ENCODE measurements at regions of chr16 and their contacts with region 1.

Region 1: DNA sequence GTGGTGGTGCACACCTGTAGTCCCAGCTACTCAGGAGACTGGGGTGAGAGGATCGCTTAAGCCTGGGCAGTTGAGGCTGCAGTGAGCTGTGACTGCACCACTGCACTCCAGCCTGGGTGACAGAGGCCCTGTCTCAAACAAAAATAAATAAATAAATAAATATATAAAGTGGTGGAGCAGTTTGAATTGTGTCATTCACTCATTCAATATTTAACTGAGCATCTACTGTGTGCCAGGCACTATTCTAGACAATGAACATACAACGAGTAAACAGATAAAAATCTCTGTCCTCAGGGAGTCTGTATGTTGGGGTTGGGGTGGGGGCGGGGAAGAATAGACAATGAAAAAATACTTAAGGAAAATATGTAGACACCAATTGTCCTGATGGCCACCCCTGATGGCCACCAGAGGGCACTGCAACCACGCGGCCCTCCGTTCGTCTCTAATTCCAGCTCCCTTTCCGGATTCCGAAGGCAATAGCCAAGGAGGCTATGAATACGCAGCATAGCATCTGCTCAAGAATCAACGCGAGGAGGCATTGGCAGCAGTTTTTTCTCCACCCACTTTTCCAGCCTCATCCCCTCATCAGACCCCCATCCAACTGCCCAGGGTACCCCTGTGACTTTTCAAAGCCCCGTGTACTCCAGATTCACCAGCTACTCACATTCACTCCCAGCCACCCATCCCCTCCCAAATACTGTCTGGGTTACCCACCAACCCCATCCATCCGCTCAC is 21.4 kb downstream of the QPRT start:
- DNase-seq: peak; percentile 28
- H3K4me3 ChIP-seq: no peak overlapping the region
- CTCF ChIP-seq: peak; percentile 83

Region 2: GRCh38 chr16:29182501-29182900 is 517.9 kb before region 1 on chr16:
- CTCF ChIA-PET with region 1: no interaction called
- POLR2A ChIA-PET with region 1: no interaction called
- DNase-seq: no peak
- H3K4me3 ChIP-seq: no peak overlapping the region
- CTCF ChIP-seq: no peak

Region 3: DNA sequence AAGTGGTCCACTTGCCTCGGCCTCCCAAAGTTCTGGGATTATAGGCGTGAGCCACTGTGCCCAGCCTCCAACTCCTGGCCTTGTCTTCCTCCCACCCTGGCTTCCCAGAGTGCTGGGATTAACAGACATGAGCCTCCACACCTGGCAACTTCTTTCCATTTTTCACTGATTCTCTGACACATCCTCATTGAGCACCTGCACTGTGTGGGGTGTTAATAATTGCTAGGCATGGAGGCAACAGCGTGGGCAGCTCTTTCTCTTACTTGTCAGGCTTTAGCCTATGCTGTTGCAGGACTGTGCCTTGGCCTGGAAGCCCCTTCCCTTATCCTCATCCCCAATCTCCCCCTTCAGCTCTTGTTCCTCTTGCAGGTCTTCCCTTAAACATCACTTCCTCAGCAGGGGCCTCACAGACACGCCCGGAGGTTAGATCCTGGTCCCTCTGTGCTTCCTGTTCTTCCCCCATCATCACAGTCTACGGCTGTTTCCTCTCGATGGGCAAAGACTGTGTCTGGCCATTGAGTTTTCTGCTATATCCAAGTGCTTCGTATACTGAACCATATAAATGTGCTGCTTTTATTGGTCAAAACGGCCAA is 13.6 kb before region 1 on chr16:
- CTCF ChIA-PET with region 1: interaction called, 22 read pairs
- POLR2A ChIA-PET with region 1: no interaction called
- DNase-seq: no peak
- H3K4me3 ChIP-seq: no peak overlapping the region
- CTCF ChIP-seq: no peak

Region 4: DNA sequence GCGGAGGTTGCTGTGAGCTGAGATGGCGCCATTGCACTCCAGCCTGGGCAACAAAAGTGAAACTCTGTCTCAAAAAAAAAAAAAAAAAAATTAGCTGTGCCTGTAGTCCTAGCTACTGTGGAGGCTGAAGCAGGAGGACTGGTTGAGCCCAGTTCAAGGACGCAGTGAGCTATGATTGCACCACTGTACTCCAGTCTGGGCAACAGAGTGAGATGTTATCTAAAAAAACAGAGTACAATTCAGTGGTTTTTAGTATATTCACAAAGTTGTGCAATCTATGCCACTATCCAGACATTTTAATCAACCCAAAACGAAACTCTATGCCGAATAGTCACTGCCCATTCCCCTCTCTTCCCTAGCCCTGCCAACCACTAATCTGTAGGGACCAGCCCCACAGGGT is 20.3 kb after region 1 on chr16:
- CTCF ChIA-PET with region 1: interaction called, 124 read pairs
- POLR2A ChIA-PET with region 1: no interaction called
- DNase-seq: no peak
- H3K4me3 ChIP-seq: no peak overlapping the region
- CTCF ChIP-seq: no peak

Region 5: GRCh38 chr16:29784901-29785500 is 84.6 kb after region 1 on chr16:
- CTCF ChIA-PET with region 1: interaction called, 14 read pairs
- POLR2A ChIA-PET with region 1: no interaction called
- DNase-seq: no peak
- H3K4me3 ChIP-seq: peak overlapping the region; percentile 32
- CTCF ChIP-seq: peak; percentile 88

Region 6: GRCh38 chr16:29848420-29849297 is 148.2 kb after region 1 on chr16:
- CTCF ChIA-PET with region 1: interaction called, 19 read pairs
- POLR2A ChIA-PET with region 1: no interaction called
- DNase-seq: no peak
- H3K4me3 ChIP-seq: no peak overlapping the region
- CTCF ChIP-seq: peak; percentile 90

Measured in AG04449 (cell line).